Lower leg skin (tissue), 4 donors: ENCODE measurements at regions of chr17 and their contacts with region 1.

Region 1: GRCh38 chr17:27601069-27601975 is 29.7 kb upstream of the LGALS9 start:
- DNase-seq: peak; percentile 85 to 96
- H3K4me3 ChIP-seq: no peak overlapping the region
- CTCF ChIP-seq: peak in 2 of 3 donors; percentile 3 to 54
- POLR2A ChIP-seq: no peak

Region 2: DNA sequence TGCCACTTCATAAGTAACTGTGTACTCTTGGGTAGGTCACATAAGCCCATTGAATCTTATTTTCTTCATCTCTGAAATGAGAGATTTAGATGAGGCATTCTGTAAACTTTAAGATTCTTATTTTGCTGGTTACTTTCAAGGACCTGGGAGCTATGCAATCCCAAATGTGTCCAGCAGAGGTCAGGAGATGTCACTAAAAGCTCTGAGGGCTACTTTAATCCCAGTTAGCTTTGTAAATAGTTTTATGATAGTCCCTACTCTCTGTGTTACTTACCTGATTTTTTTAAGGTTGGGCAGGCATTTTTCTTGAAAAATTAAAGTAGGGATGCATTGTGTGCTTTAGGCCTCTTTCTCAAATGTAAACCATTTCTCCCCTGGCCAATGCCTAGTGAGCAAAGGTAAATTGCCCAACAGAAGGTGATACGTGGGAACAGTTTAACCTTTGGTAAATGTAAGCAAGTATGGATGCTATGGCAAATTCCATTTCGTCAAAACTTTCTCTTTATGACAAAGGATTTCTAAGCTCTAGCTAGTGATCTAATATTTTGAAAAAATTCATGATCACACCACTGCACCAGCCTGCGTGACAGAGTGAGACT is 364.5 kb before region 1 on chr17:
- intact Hi-C with region 1: loop called (anchors 2 kb)
- DNase-seq: peak; percentile 87 to 95
- H3K4me3 ChIP-seq: no peak overlapping the region
- CTCF ChIP-seq: peak in 1 of 3 donors; percentile 79
- POLR2A ChIP-seq: no peak

Region 3: DNA sequence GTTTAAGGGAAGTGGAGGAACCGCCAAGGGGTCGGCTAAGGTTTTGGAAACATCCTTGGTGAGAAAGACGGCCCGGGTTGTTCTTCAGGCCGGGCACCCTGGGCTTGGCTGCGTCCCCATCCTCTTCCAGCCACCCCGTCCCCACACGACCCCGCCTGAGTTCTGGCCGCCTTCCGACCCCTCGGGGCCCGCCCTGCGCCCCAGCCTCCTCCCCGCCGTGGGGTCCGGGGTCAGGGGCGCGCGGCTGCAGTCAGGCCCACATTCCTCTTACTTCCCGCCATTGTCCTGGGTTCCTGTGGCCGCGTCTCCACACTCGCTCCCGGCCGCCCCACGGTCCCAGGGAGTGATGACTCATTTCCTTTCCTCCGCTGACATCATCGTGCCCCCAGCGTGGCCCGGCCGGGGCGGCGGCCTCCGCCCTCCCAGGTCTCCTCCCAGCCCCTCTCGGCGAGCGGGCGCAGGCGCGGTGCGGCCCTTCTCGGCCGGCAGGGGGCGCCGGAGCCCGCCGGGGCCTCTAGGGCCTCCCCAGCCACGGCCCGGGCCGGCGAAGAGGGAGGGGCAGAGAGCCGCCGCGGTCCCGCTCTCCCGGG is 247.8 kb before region 1 on chr17:
- intact Hi-C with region 1: loop called (anchors 5 kb)
- DNase-seq: peak; percentile 85 to 99
- H3K4me3 ChIP-seq: peak overlapping the region; percentile 27
- CTCF ChIP-seq: peak in 1 of 3 donors; percentile 19
- POLR2A ChIP-seq: peak in 1 of 2 donors; percentile 49

Region 4: GRCh38 chr17:27466743-27467375 is 134.5 kb before region 1 on chr17:
- intact Hi-C with region 1: loop called (anchors 10 kb)
- DNase-seq: no peak
- H3K4me3 ChIP-seq: no peak overlapping the region
- CTCF ChIP-seq: no peak
- POLR2A ChIP-seq: no peak

Region 5: GRCh38 chr17:27532269-27533263 is 68.8 kb before region 1 on chr17:
- intact Hi-C with region 1: loop called (anchors 10 kb)
- DNase-seq: peak in 1 of 2 donors; percentile 23
- H3K4me3 ChIP-seq: no peak overlapping the region
- CTCF ChIP-seq: no peak
- POLR2A ChIP-seq: no peak

Region 6: DNA sequence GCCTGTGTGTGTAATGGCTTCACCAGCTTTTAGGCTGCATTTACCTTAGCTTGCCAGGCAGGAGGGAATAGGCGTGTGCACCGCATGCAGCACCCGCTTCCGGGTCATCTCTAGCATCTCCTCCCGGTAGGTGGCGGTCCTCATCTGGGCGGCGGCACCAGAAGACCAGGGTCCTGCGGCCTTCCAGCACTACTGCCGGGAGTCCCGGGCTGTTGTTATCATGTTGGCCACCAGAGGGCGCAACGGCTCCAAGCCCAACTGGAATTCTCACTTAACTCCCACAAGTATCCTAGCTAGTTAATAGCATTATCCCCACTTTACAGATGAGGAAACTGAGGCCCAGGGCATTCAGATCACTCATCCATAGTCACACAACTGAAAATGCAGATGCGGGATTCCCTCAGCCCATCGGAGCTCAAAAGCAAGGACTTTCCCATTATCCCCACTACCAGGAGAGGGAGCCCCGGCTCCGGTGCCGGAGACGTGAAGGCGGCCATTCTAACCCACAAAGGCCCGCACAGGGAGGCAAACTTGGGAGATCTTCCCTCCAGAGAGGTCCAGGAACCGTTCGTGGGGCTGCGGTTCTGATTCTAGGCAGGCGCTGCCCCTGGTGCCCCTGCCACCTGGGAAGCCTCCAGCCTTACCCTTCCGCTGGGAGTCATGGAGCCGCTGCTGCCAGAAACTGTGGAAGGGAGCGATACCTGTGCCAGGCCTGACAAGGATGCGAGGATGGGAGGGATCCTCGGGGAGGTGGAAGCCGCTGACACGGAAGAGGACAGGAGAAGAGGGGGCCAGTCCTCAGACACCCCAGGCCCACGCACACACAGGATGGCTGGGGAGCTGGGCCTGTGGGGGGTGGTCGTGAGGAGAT is 53.6 kb after region 1 on chr17:
- intact Hi-C with region 1: loop called (anchors 5 kb)
- DNase-seq: peak; percentile 59 to 94
- H3K4me3 ChIP-seq: no peak overlapping the region
- CTCF ChIP-seq: peak in 1 of 3 donors; percentile 72
- POLR2A ChIP-seq: no peak